ENCODE measurements at regions of chr20 and their contacts with region 1.

Region 1: DNA sequence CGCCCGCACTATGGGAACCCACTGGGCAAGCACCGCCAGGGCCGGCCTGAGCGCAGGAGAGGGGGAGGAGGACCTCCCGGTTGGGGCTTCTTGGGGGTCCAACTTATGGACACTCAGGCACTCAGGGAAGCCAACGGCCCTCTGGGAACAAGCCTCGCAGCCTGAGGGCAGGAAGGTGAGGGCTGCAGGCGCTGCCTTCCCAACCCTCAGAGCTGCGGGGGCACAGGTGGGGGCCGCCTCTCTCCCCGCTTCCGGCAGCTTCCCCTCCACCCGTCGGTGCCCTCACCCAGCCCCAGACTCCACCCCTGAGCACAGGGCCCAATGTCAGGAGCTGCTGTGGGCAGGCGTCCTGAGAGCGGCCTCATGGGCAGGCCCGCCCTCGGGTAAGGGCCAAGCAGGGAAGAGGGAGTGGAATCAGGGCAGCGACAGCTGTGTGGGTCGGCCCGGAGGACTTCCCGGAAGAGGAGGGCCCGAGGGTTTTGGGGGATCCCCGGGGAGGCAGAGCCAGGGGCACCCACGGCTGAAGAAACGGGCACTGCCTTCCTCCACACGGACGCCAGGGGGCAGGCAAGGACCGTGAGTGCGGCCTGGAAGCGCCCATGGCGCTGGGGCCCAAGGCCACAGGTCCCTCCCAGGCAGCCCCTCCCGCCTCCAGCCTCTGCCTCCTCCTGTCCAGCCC is 488 bp upstream of the PTK6 start:
- DNase-seq: peak; percentile 93
- ATAC-seq: peak; percentile 97
- H3K4me3 ChIP-seq: peak overlapping the region; percentile 63
- H3K27ac ChIP-seq: peak overlapping the region; percentile 82
- H3K4me1 ChIP-seq: peaks cover 20% of the 10 kb centered on the region
- H3K27me3 ChIP-seq: no peaks in the 10 kb centered on the region
- CTCF ChIP-seq: peak; percentile 94 to 100 (median 97); a peak in 5 of 6 replicates
- EP300 ChIP-seq: peak in 1 of 2 experiments; percentile 10; a peak in 1 of 4 replicates
- POLR2A ChIP-seq: peak; percentile 84
- RAD21 ChIP-seq: peak; percentile 89

Region 2: DNA sequence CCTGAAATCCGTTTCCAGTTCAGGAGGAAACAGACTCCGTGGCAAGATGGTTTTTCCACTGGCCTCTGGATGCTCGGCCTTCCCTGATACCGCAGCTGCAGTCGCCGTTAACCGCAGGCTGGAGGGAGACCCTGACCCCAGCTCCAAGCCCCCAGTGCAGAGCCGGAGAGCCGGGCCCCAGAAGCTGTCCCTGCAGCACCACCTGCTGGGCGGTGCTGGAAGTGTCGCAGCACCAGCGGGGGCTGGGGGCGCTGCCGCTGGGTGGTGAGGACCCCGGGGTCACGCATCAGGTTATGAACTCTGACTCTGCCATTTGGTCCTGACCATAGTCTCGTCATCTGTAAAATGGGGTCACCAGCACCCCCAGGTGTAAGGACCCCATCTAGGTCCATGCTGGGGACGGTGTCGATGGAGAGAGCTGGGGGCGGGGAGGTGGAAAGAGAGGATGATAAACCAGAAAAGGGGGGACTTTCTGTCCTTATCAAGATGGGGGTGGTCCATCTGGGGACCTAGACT is 155.8 kb before region 1 on chr20:
- CTCF ChIA-PET with region 1: no interaction called
- POLR2A ChIA-PET with region 1: no interaction called
- RAD21 ChIA-PET with region 1: no interaction called
- SMC1A ChIA-PET with region 1: no interaction called
- in situ Hi-C with region 1: no loop called
- intact Hi-C with region 1: no loop called
- DNase-seq: no peak
- ATAC-seq: peak; percentile 54
- H3K4me3 ChIP-seq: no peak overlapping the region
- H3K27ac ChIP-seq: no peak overlapping the region
- H3K4me1 ChIP-seq: no peaks in the 10 kb centered on the region
- H3K27me3 ChIP-seq: no peaks in the 10 kb centered on the region
- CTCF ChIP-seq: peak; percentile 73 to 85 (median 79)
- EP300 ChIP-seq: no peak
- POLR2A ChIP-seq: no peak
- RAD21 ChIP-seq: peak; percentile 72

Region 3: DNA sequence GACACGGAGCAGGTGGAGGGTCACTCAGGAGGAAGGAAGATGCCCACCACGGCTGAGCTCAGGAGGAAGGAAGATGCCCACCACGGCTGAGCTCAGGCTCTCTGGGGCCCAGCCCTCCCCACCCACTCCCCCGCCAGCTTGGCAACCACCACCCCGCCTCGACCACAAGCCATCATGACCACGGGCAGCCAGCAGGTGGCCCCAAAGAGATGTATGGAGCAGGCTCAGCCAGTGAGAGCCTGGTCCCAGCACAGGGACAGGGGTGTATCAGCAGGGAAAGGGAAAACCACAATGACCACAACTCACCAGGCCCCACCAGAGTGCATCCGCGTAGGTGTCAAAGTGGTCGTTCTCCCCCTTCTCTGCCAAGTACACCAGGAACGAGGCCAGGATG is 95.6 kb before region 1 on chr20:
- CTCF ChIA-PET with region 1: interaction called, 11 read pairs
- POLR2A ChIA-PET with region 1: interaction called, 3 read pairs
- RAD21 ChIA-PET with region 1: interaction called, 3 read pairs
- SMC1A ChIA-PET with region 1: interaction called, 4 read pairs
- in situ Hi-C with region 1: no loop called
- intact Hi-C with region 1: no loop called
- DNase-seq: peak; percentile 26
- ATAC-seq: peak; percentile 78
- H3K4me3 ChIP-seq: no peak overlapping the region
- H3K27ac ChIP-seq: peak overlapping the region; percentile 53; the same call in 1 of the 2 replicates
- H3K4me1 ChIP-seq: peaks cover 16% of the 10 kb centered on the region
- H3K27me3 ChIP-seq: no peaks in the 10 kb centered on the region; a peak in 1 of 4 replicates
- CTCF ChIP-seq: peak; percentile 37 to 72 (median 55); a peak in 5 of 6 replicates
- EP300 ChIP-seq: no peak
- POLR2A ChIP-seq: no peak
- RAD21 ChIP-seq: peak; percentile 47

Region 4: DNA sequence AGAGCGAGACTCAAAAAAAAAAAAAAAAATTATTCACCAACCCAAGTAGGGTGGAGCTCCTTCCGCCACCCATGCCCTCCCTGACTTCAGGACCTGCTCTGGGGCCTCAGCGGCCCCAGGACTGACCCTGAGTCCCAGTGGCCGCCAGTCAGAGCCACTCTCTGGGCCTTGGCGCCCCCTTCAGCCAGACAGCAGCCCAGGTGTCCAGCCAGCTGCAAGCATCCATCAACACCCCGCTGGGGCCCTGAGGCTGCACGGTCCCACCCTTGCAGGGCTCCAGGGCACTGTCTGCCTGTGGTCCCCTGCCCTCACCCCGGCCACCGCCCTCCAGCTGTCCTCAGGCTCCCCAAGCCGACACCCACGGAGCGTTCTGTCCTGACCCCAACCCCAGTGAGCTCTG is 53.8 kb before region 1 on chr20:
- CTCF ChIA-PET with region 1: no interaction called
- POLR2A ChIA-PET with region 1: no interaction called
- RAD21 ChIA-PET with region 1: no interaction called
- SMC1A ChIA-PET with region 1: no interaction called
- in situ Hi-C with region 1: no loop called
- intact Hi-C with region 1: no loop called
- DNase-seq: no peak
- ATAC-seq: peak; percentile 28
- H3K4me3 ChIP-seq: no peak overlapping the region
- H3K27ac ChIP-seq: no peak overlapping the region
- H3K4me1 ChIP-seq: no peaks in the 10 kb centered on the region; the same call in 1 of the 2 replicates
- H3K27me3 ChIP-seq: peaks cover 0 to 1% of the 10 kb centered on the region in 2 experiments; a peak in 1 of 4 replicates
- CTCF ChIP-seq: no peak
- EP300 ChIP-seq: no peak
- POLR2A ChIP-seq: no peak
- RAD21 ChIP-seq: 0 out of 2 replicates have a peak, but pooled peaks have one; percentile 4

Region 5: GRCh38 chr20:63553227-63553932 is 15.7 kb after region 1 on chr20:
- CTCF ChIA-PET with region 1: interaction called, 9 read pairs
- POLR2A ChIA-PET with region 1: interaction called, 11 read pairs
- RAD21 ChIA-PET with region 1: interaction called, 23 read pairs
- SMC1A ChIA-PET with region 1: interaction called, 16 read pairs
- in situ Hi-C with region 1: no loop called
- intact Hi-C with region 1: loop called (anchors 1 kb)
- DNase-seq: peak; percentile 35
- ATAC-seq: peak; percentile 71
- H3K4me3 ChIP-seq: peak overlapping the region; percentile 65; the same call in 1 of the 2 replicates
- H3K27ac ChIP-seq: peak overlapping the region; percentile 64
- H3K4me1 ChIP-seq: peaks cover 22% of the 10 kb centered on the region
- H3K27me3 ChIP-seq: no peaks in the 10 kb centered on the region; a peak in 1 of 4 replicates
- CTCF ChIP-seq: no peak
- EP300 ChIP-seq: no peak
- POLR2A ChIP-seq: no peak
- RAD21 ChIP-seq: no peak

Region 6: GRCh38 chr20:63627129-63627750 is 89.6 kb after region 1 on chr20:
- CTCF ChIA-PET with region 1: interaction called, 3 read pairs
- POLR2A ChIA-PET with region 1: interaction called, 4 read pairs
- RAD21 ChIA-PET with region 1: interaction called, 7 read pairs
- SMC1A ChIA-PET with region 1: interaction called, 3 read pairs
- in situ Hi-C with region 1: no loop called
- intact Hi-C with region 1: loop called (anchors 5 kb)
- DNase-seq: peak; percentile 57
- ATAC-seq: peak; percentile 84
- H3K4me3 ChIP-seq: peak overlapping the region; percentile 94
- H3K27ac ChIP-seq: peak overlapping the region; percentile 73
- H3K4me1 ChIP-seq: peaks cover 8% of the 10 kb centered on the region
- H3K27me3 ChIP-seq: no peaks in the 10 kb centered on the region
- CTCF ChIP-seq: no peak
- EP300 ChIP-seq: no peak
- POLR2A ChIP-seq: peak; percentile 92
- RAD21 ChIP-seq: no peak

Region 7: DNA sequence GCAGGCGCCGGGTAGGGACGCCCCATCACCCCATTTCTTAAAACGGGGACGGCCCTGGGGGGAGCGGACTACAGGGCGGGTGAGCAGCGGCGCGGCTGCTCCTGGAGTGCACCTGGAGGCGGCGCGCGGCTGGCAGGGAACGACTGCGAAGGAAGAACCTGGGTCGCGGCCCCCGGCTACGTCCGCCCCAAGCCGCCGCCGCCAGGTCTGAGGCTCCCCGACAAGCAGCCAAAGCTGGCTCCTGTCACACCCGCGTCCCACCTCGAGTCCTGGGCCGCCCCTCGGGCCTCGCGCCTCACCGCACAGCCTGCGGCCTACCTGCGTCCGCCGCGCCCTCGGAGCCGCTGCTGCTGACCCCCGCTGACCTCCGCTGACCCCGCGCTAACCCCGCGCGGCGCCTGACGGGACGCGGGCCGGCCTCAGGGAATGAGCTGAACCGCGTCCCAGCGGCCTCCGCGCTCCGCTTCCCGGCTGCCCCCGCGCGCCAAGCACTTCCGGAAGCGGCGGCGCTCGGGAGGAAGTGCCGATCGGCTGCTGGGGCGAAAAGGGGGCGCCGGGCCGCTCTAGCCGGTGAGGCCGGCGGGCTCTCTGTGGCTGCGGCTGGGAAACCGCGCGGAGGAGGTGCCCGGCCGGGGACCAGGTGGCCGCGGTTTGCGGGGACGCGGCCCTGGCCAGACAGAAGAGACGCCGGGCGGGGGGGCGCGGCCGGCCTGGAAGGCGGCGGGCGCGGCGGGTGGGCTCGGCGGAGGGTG is 170.1 kb after region 1 on chr20 and contains the starts of genes ARFRP1 and ZGPAT:
- CTCF ChIA-PET with region 1: no interaction called
- POLR2A ChIA-PET with region 1: no interaction called
- RAD21 ChIA-PET with region 1: interaction called, 16 read pairs
- SMC1A ChIA-PET with region 1: interaction called, 4 read pairs
- in situ Hi-C with region 1: no loop called
- intact Hi-C with region 1: no loop called
- DNase-seq: no peak
- ATAC-seq: peak; percentile 93
- H3K4me3 ChIP-seq: peak within 1 kb of the TSS; percentile 89
- H3K27ac ChIP-seq: peak within 1 kb of the TSS; percentile 74
- H3K4me1 ChIP-seq: peaks cover 12% of the 10 kb centered on the region
- H3K27me3 ChIP-seq: no peaks in the 10 kb centered on the region
- CTCF ChIP-seq: peak in 1 of 3 experiments; percentile 2; a peak in 1 of 6 replicates
- EP300 ChIP-seq: no peak
- POLR2A ChIP-seq: peak; percentile 83
- RAD21 ChIP-seq: 0 out of 2 replicates have a peak, but pooled peaks have one; percentile 19
- polyA plus RNA-seq, gene ARFRP1: 0.37 to 3.5 TPM
- polyA plus RNA-seq, gene ZGPAT: 0.58 to 0.79 TPM

Region 8: DNA sequence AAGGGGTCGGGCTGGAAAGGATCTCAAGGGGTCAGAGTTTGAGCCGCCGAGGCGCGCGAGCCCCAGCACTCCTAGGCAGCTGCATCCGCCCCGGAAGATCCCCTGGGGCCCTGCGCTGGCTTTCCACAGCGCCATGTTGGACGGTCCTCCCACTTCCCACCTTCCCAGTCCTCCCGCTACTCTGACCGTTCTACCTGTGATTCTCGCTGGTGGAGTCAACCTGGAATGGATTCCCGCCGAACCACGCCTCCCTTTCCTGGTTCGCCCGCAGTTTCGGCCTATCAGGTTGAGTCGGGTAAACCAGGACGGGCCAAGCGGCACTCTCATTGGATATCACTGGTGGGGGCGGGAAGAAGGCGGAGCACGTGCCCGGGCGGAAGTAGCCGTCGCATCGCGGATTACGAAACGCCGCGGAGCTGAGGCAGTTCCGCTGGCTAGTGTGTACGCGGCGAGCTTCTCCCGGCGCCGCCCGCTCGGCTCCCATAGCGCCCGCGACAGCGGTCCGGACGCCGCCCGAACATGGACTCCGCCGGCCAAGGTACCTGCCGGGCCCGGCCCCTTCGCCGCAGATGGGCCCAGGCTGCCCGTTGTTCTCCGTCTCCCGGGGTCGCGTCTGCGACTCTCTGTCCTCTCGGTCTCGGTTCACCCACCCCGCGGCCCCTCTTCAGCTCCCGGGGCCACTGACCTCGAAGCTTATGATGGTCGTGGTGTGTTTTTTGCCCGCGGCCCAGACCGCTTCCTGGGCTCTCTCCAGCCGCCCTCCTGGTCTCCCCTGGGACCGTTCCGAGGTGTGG is 327.4 kb after region 1 on chr20 and contains the start of gene TPD52L2:
- CTCF ChIA-PET with region 1: interaction called, 25 read pairs
- POLR2A ChIA-PET with region 1: interaction called, 6 read pairs
- RAD21 ChIA-PET with region 1: interaction called, 9 read pairs
- SMC1A ChIA-PET with region 1: interaction called, 5 read pairs
- in situ Hi-C with region 1: no loop called
- intact Hi-C with region 1: loop called (anchors 1 kb)
- DNase-seq: peak; percentile 94
- ATAC-seq: peak; percentile 91
- H3K4me3 ChIP-seq: peak within 1 kb of the TSS; percentile 96
- H3K27ac ChIP-seq: peak within 1 kb of the TSS; percentile 90
- H3K4me1 ChIP-seq: peaks cover 7% of the 10 kb centered on the region
- H3K27me3 ChIP-seq: no peaks in the 10 kb centered on the region
- CTCF ChIP-seq: no peak
- EP300 ChIP-seq: 0 out of 4 replicates have a peak, but pooled peaks of 1 of the 2 experiments have one; percentile 19
- POLR2A ChIP-seq: peak; percentile 96
- RAD21 ChIP-seq: no peak
- polyA plus RNA-seq, gene TPD52L2: 1.6 to 4.1 TPM

Region 9: GRCh38 chr20:64079273-64080012 is 541.8 kb after region 1 on chr20 and contains the start of gene RGS19:
- CTCF ChIA-PET with region 1: no interaction called
- POLR2A ChIA-PET with region 1: no interaction called
- RAD21 ChIA-PET with region 1: interaction called, 10 read pairs
- SMC1A ChIA-PET with region 1: no interaction called
- in situ Hi-C with region 1: no loop called
- intact Hi-C with region 1: no loop called
- DNase-seq: no peak
- ATAC-seq: peak; percentile 45
- H3K4me3 ChIP-seq: peak within 1 kb of the TSS; percentile 83
- H3K27ac ChIP-seq: peak within 1 kb of the TSS; percentile 85
- H3K4me1 ChIP-seq: peaks cover 26% of the 10 kb centered on the region
- H3K27me3 ChIP-seq: peaks cover 2 to 4% of the 10 kb centered on the region in 2 experiments; a peak in 2 of 4 replicates
- CTCF ChIP-seq: no peak
- EP300 ChIP-seq: no peak
- POLR2A ChIP-seq: peak; percentile 67
- RAD21 ChIP-seq: no peak
- polyA plus RNA-seq, gene RGS19: 0.82 to 3.3 TPM

Measured in GM12878 (cell line).